ENCODE measurements at regions of chr1 and their contacts with region 1.

Region 1: GRCh38 chr1:46718727-46719622 is at the start of gene EFCAB14:
- DNase-seq: peak; percentile 94
- ATAC-seq: peak; percentile 99 to 100
- total RNA-seq, gene EFCAB14: 66.1 to 72.4 TPM

Region 2: DNA sequence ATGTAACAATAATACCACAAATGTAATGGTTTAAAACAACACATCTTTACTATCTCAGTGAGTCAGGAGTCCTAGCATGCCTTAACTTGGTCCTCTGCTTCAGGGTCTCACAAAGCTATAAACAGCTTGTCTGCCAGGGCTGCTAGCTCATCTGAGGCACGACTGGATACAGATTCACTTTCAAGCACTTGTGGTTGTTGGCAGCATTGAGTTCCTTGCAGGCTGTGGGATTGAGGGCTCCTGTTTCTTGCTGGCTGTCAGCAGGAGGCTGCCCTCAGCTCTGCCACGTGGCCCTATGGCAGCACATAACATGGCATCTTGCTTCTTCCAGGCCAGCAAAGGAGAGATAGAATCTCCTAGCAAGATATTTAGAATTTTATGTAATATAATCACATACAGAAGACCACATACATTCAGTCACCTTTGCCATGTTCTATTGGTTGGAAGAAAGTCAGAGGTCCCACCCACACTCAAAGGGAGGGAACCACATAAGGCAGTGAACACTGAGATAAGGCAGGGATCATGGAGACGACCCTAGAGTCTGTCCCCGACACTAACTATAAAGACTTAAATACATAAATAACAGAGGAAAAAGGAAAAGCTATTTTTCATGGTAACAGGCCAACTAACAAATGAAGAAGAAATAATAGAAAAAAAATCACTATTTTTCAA is 949.6 kb before region 1 on chr1:
- intact Hi-C with region 1: no loop called
- DNase-seq: no peak
- ATAC-seq: peak in 1 of 2 donors; percentile 30

Region 3: DNA sequence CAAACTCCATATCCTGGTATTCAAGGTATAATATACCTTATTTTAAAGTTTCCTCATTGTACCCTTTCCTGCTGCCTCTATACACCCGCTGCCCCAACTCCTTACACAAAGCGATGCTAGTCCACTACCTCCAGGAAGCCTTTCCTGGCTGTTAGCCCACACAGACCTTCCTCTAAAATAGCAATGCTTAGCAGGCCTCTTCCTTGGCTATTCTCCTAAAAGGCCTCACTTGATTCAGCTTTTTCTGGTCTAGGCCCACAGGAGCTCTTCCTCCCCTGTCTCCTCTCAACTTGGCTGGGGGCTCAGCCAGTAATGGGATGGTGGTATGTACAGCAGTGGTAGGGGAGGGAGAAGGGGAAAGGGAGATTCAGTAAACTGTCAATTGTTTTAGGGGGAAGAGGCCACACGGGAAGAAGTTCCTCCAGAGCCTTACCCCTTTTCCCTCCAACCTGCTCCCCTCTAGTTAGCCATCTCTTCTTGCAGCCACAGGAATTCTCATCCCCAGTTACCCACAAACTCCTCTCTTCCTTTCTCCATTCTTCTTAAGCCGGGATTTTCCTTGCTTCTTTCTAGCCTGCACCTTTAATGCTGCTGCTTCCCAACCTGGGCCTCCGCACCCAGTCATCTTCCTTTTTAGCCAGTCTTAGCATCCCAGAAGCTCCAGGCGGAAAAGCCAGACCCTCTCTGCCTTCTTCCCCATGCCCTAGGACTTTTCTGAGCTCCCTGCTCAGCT is 418.1 kb before region 1 on chr1:
- intact Hi-C with region 1: no loop called
- DNase-seq: peak; percentile 42
- ATAC-seq: no peak

Region 4: GRCh38 chr1:46556822-46557221 is 162.2 kb before region 1 on chr1:
- intact Hi-C with region 1: no loop called
- DNase-seq: no peak
- ATAC-seq: peak in 1 of 2 donors; percentile 68

Region 5: GRCh38 chr1:46643368-46643775 is 75.6 kb before region 1 on chr1:
- intact Hi-C with region 1: loop called in 1 of 2 experiments (anchors 10 kb)
- DNase-seq: no peak
- ATAC-seq: peak; percentile 55 to 60

Region 6: GRCh38 chr1:46667782-46668760 is 50.9 kb before region 1 on chr1 and contains the start of gene ATPAF1:
- intact Hi-C with region 1: loop called in 1 of 2 experiments (anchors 5 kb)
- DNase-seq: peak; percentile 86
- ATAC-seq: peak; percentile 95
- total RNA-seq, gene ATPAF1: 134 to 137 TPM

Measured in left cardiac atrium (tissue), 4 donors.